Endothelial cell of umbilical vein (primary cell): ENCODE measurements at regions of chr1 and their contacts with region 1.

Region 1: GRCh38 chr1:113490384-113490783 is 100.1 kb downstream of the MAGI3 start:
- DNase-seq: no peak
- H3K4me3 ChIP-seq: no peak overlapping the region
- H3K27ac ChIP-seq: no peak overlapping the region
- H3K4me1 ChIP-seq: no peaks in the 10 kb centered on the region
- H3K27me3 ChIP-seq: no peaks in the 10 kb centered on the region
- CTCF ChIP-seq: no peak
- POLR2A ChIP-seq: no peak

Region 2: DNA sequence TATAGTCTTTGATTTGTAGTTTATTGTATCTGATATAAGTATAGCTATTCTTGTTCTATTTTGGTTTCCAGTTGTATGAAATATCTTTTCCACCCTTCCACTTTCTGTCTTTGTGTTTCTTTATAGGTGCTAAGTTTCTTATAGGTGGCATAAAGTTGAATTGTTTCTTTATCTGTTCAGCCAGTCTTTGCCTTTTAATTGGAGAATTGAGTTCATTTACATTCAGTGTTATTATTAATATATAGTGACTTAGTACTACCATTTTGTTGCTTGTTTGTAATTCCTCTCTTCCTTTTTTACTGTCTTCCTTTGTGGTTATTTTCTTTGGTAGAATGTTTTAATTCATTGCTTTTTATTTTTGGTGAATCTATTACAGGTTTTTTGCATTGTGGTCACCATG is 22.4 kb before region 1 on chr1:
- CTCF ChIA-PET with region 1: no interaction called
- POLR2A ChIA-PET with region 1: no interaction called
- dilution Hi-C with region 1: no loop called
- intact Hi-C with region 1: no loop called
- DNase-seq: no peak
- H3K4me3 ChIP-seq: no peak overlapping the region
- H3K27ac ChIP-seq: no peak overlapping the region
- H3K4me1 ChIP-seq: no peaks in the 10 kb centered on the region
- H3K27me3 ChIP-seq: no peaks in the 10 kb centered on the region
- CTCF ChIP-seq: no peak
- POLR2A ChIP-seq: no peak

Region 3: GRCh38 chr1:113507552-113508214 is 17.3 kb after region 1 on chr1:
- CTCF ChIA-PET with region 1: interaction called, 12 read pairs
- POLR2A ChIA-PET with region 1: no interaction called
- dilution Hi-C with region 1: no loop called
- intact Hi-C with region 1: no loop called
- DNase-seq: no peak
- H3K4me3 ChIP-seq: no peak overlapping the region
- H3K27ac ChIP-seq: no peak overlapping the region
- H3K4me1 ChIP-seq: no peaks in the 10 kb centered on the region
- H3K27me3 ChIP-seq: no peaks in the 10 kb centered on the region
- CTCF ChIP-seq: no peak
- POLR2A ChIP-seq: no peak

Region 4: DNA sequence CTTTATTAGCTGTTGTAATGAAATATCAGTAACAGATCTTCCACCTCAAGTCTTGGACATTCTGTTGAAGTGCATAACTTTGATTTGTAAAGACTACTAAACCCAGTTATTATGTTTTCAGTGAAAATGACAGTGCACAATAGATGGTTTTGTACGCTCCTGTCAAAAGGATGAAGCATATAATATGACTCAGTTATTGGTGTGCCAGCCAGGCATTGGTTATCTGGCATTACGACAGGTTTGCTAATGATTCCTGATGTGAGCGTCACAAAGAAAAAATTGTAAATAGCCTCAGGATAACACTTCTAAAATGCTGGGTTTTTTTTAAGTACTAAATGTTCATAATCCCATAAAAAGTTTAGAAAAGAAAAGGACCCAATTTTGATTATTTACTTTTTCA is 47.8 kb after region 1 on chr1:
- CTCF ChIA-PET with region 1: no interaction called
- POLR2A ChIA-PET with region 1: no interaction called
- dilution Hi-C with region 1: no loop called
- intact Hi-C with region 1: no loop called
- DNase-seq: no peak
- H3K4me3 ChIP-seq: no peak overlapping the region
- H3K27ac ChIP-seq: no peak overlapping the region
- H3K4me1 ChIP-seq: no peaks in the 10 kb centered on the region
- H3K27me3 ChIP-seq: no peaks in the 10 kb centered on the region
- CTCF ChIP-seq: no peak
- POLR2A ChIP-seq: no peak